ENCODE measurements at regions of chr6 and their contacts with region 1.

Region 1: DNA sequence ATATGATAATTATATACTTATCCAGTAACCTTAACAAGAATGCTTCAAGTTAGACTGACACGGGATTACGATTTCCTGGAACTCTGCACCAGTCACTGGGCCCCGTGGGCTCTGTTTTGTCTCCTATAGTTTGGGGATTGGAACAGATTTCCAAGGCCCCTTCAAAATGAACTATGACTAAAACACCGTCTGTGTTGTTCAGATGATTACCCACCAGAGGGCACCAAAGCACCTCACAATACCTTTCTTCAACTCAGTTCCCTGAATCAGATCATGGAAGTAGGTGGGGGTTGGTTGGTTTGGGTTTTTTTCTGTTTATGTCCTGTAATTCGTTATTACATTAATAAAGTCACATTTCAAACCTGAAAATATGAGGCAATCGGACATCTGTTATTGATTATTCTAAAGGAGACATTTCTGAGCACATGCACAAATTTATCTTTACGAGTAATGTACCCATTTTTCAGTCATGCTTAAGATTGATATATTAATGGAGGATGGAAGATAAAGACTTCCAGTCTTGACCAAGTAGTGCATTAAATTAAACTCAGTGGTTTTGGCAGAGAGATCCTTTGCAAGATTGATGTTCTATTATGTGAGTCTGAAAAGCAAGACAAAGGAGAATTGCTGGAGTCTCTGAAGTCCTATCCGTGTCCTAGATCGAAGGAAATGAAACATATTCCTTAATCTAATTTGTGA is 112.0 kb upstream of the COL21A1 start:
- DNase-seq: peak; percentile 79
- ATAC-seq: peak; percentile 90
- H3K4me3 ChIP-seq: no peak overlapping the region
- H3K27ac ChIP-seq: no peak overlapping the region
- H3K4me1 ChIP-seq: peaks cover 3% of the 10 kb centered on the region
- H3K27me3 ChIP-seq: no peaks in the 10 kb centered on the region
- CTCF ChIP-seq: peak; percentile 88
- POLR2A ChIP-seq: no peak
- RAD21 ChIP-seq: peak; percentile 94

Region 2: DNA sequence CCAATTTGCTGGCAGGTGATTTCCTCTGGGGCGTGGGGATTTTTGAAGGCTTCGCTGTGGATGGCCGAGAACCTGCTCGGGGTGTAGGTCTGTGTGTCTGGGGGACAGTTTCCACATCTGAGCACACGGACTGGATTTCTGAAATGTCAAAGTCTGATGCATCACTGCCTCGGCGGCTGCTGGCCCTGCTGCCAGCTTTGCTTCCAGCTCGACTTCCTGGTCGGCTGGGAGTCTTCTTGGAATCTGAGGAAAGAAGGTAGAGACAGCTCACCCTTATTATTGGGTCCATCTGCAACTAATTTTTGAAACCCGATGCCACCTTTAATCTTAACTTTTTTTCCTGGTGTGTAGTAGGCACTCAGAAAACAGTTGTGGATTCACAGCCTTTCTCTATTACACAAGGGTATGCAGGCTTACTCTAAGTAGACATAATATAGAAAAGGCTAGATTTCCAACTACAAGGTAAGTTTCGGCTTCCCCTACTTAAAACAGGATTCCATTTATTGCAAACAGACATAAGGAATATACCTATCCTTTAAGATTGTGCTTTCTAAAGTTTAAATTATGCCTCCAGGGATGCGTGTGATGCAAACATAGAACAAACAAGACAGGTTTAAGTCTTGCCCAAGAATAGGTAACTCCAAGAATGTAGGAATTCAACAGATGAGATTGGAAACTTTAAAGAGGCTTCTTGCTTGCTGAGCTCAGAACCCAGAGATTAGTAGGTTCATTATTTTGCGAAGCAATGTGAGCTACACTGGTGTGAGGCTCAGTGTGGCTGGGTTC is 99.9 kb after region 1 on chr6:
- CTCF ChIA-PET with region 1: no interaction called
- POLR2A ChIA-PET with region 1: no interaction called
- dilution Hi-C with region 1: no loop called
- in situ Hi-C with region 1: no loop called
- intact Hi-C with region 1: loop called (anchors 2 kb)
- DNase-seq: no peak
- ATAC-seq: no peak
- H3K4me3 ChIP-seq: no peak overlapping the region
- H3K27ac ChIP-seq: no peak overlapping the region
- H3K4me1 ChIP-seq: no peaks in the 10 kb centered on the region
- H3K27me3 ChIP-seq: no peaks in the 10 kb centered on the region
- CTCF ChIP-seq: no peak
- POLR2A ChIP-seq: no peak
- RAD21 ChIP-seq: no peak

Region 3: GRCh38 chr6:56570413-56571359 is 211.3 kb after region 1 on chr6:
- CTCF ChIA-PET with region 1: interaction called, 3 read pairs
- POLR2A ChIA-PET with region 1: no interaction called
- dilution Hi-C with region 1: loop called (anchors 25 kb)
- in situ Hi-C with region 1: loop called (anchors 10 kb)
- intact Hi-C with region 1: loop called (anchors 5 kb)
- DNase-seq: peak; percentile 39
- ATAC-seq: peak; percentile 70
- H3K4me3 ChIP-seq: no peak overlapping the region
- H3K27ac ChIP-seq: no peak overlapping the region
- H3K4me1 ChIP-seq: peaks cover 2% of the 10 kb centered on the region; the same call in 1 of the 2 replicates
- H3K27me3 ChIP-seq: no peaks in the 10 kb centered on the region
- CTCF ChIP-seq: peak; percentile 44
- POLR2A ChIP-seq: no peak
- RAD21 ChIP-seq: peak; percentile 44; the same call in 1 of the 2 replicates

Region 4: GRCh38 chr6:56693246-56693607 is 333.9 kb after region 1 on chr6:
- CTCF ChIA-PET with region 1: no interaction called
- POLR2A ChIA-PET with region 1: no interaction called
- dilution Hi-C with region 1: no loop called
- in situ Hi-C with region 1: no loop called
- intact Hi-C with region 1: loop called (anchors 5 kb)
- DNase-seq: peak; percentile 87
- ATAC-seq: peak; percentile 47
- H3K4me3 ChIP-seq: peak overlapping the region; percentile 45; the same call in 1 of the 2 replicates
- H3K27ac ChIP-seq: peak overlapping the region; percentile 99; the same call in 1 of the 2 replicates
- H3K4me1 ChIP-seq: peaks cover 8% of the 10 kb centered on the region
- H3K27me3 ChIP-seq: no peaks in the 10 kb centered on the region
- CTCF ChIP-seq: no peak
- POLR2A ChIP-seq: peak; percentile 58; the same call in 1 of the 2 replicates
- RAD21 ChIP-seq: no peak

Region 5: GRCh38 chr6:56814308-56814707 is 455.0 kb after region 1 on chr6:
- CTCF ChIA-PET with region 1: no interaction called
- POLR2A ChIA-PET with region 1: no interaction called
- dilution Hi-C with region 1: no loop called
- in situ Hi-C with region 1: no loop called
- intact Hi-C with region 1: no loop called
- DNase-seq: no peak
- ATAC-seq: no peak
- H3K4me3 ChIP-seq: no peak overlapping the region
- H3K27ac ChIP-seq: no peak overlapping the region
- H3K4me1 ChIP-seq: peaks cover 17% of the 10 kb centered on the region
- H3K27me3 ChIP-seq: no peaks in the 10 kb centered on the region
- CTCF ChIP-seq: no peak
- POLR2A ChIP-seq: no peak
- RAD21 ChIP-seq: no peak

Region 6: GRCh38 chr6:56851541-56852259 is 492.4 kb after region 1 on chr6:
- CTCF ChIA-PET with region 1: no interaction called
- POLR2A ChIA-PET with region 1: no interaction called
- dilution Hi-C with region 1: no loop called
- in situ Hi-C with region 1: loop called (anchors 25 kb)
- intact Hi-C with region 1: loop called (anchors 2 kb)
- DNase-seq: peak; percentile 89
- ATAC-seq: peak; percentile 76
- H3K4me3 ChIP-seq: peak overlapping the region; percentile 64
- H3K27ac ChIP-seq: peak overlapping the region; percentile 92
- H3K4me1 ChIP-seq: peaks cover 16% of the 10 kb centered on the region
- H3K27me3 ChIP-seq: no peaks in the 10 kb centered on the region
- CTCF ChIP-seq: peak; percentile 68
- POLR2A ChIP-seq: peak; percentile 72
- RAD21 ChIP-seq: peak; percentile 81